ENCODE measurements at regions of chr14 and their contacts with region 1.

Region 1: DNA sequence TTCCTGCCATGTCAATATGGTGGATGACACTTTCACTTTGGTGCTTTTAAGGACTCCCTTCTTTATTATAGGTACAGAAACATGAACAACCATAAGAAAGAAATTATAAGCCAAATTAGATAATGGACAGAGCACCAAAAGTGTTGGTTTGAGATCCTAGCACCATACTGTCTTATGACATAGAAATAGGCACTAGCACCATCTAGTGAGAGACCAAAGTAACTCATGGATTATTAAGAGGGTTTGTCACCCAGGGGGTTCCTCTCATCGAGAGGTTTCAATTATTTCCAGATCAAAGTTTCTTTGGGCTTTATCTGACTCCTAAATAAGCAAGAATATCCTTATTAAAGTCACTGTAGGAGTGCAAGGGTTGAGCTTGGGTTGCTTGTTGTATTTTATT is 153.0 kb upstream of the DIO2 start:
- DNase-seq: peak; percentile 34
- H3K4me3 Mint-ChIP-seq: no peak overlapping the region
- H3K27ac Mint-ChIP-seq: no peak overlapping the region
- H3K4me1 Mint-ChIP-seq: no peaks in the 10 kb centered on the region
- H3K27me3 Mint-ChIP-seq: no peaks in the 10 kb centered on the region
- CTCF ChIP-seq: no peak

Region 2: DNA sequence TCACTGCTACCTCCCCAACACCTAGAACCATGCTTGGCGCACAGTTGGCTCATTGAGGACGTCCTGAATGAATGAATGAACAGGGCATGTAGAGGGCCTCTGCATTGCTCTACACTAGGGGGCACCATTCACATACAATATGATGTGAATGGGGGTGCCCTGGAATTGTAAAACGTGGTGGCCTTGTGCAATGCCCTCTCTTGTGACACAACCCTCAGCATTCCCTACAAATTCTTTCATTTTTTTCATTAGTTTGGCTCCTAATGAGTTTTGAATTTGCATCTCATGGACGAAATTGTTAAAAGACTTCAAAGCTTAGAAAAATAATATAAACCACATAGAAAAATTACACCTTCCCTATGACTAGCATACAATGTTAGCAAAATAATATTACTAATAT is 150.7 kb before region 1 on chr14:
- CTCF ChIA-PET with region 1: interaction called, 3 read pairs
- POLR2A ChIA-PET with region 1: no interaction called
- intact Hi-C with region 1: loop called (anchors 2 kb)
- DNase-seq: peak; percentile 83
- H3K4me3 Mint-ChIP-seq: no peak overlapping the region
- H3K27ac Mint-ChIP-seq: no peak overlapping the region
- H3K4me1 Mint-ChIP-seq: peaks cover 11% of the 10 kb centered on the region
- H3K27me3 Mint-ChIP-seq: no peaks in the 10 kb centered on the region
- CTCF ChIP-seq: peak; percentile 79

Region 3: DNA sequence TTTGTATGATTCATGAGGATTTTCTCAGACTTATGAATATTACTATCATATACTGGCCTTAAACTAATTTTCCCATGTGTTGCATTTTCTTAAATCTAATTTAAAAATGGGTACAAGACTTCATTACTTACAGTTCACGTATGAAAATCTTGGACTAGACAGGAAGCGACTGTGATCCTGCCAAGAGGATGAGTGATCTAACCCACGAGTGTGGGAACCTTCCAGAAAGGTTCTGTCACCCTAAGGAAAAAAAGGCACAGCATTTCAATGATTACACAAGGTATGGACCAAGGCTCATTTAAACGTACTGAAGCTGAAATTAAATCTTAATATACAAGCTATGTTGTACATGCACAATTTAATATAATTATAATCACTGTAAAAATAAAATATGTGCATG is 140.5 kb after region 1 on chr14:
- CTCF ChIA-PET with region 1: no interaction called
- POLR2A ChIA-PET with region 1: no interaction called
- intact Hi-C with region 1: no loop called
- DNase-seq: no peak
- H3K4me3 Mint-ChIP-seq: no peak overlapping the region
- H3K27ac Mint-ChIP-seq: no peak overlapping the region
- H3K4me1 Mint-ChIP-seq: no peaks in the 10 kb centered on the region
- H3K27me3 Mint-ChIP-seq: no peaks in the 10 kb centered on the region
- CTCF ChIP-seq: no peak

Measured in MCF 10A (cell line).